ENCODE measurements at regions of chr18 and their contacts with region 1.

Region 1: DNA sequence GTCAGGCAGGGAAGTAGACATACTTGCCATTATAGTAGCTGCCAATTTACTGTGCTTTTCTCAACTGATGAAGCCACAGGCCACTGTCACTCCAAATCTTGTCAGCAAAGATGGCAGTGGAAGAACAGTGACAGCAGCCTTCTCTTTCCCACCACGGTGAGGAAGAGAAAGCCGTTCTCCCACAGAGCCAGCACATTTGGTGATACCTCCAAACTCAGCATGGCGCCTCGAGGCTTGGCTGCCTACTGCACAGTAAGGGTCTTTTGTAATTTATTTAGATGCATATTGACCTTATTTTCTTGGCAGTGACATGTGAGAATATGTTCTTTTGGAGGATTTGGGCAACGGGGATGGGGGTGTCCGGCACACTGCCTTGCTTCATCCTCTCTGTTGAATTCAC is 117.2 kb upstream of the CDH20 start:
- DNase-seq: no peak

Region 2: DNA sequence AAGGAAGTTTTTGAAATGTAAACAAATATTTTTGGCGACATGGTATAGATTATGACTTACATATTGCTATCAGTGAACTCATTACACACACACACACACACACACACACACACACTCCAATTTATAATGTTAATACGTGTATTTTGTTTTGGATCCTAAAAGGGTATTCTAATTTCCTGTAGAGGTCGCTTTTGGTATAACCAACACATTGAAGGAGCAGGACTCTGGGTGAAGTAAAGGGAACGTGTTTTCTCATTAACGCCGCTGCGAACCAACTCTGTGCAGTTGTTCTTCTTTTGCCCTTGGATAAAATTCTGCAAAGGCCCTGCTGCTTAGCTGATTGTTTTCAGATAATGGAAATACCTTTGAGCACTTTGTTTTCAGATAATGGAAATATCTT is 1125.9 kb before region 1 on chr18:
- intact Hi-C with region 1: no loop called
- DNase-seq: no peak

Region 3: GRCh38 chr18:61619783-61620182 is 403.7 kb after region 1 on chr18:
- intact Hi-C with region 1: loop called in 1 of 2 experiments (anchors 5 kb)
- DNase-seq: no peak